ENCODE measurements at regions of chr14 and their contacts with region 1.

Region 1: GRCh38 chr14:90331497-90332435 is at the start of gene NRDE2:
- DNase-seq: peak; percentile 91
- ATAC-seq: peak; percentile 100
- H3K4me3 ChIP-seq: peak within 1 kb of the TSS; percentile 71
- H3K27ac ChIP-seq: peak within 1 kb of the TSS; percentile 85
- H3K4me1 ChIP-seq: no peaks in the 10 kb centered on the region
- H3K27me3 ChIP-seq: peaks cover 2% of the 10 kb centered on the region; the same call in 1 of the 2 replicates
- CTCF ChIP-seq: no peak
- POLR2A ChIP-seq: peak; percentile 55; the same call in 1 of the 2 replicates
- RAD21 ChIP-seq: no peak
- total RNA-seq, gene NRDE2: 7.5 and 9.3 TPM in 2 replicates

Region 2: GRCh38 chr14:90140298-90140955 is 191.3 kb before region 1 on chr14:
- CTCF ChIA-PET with region 1: no interaction called
- POLR2A ChIA-PET with region 1: no interaction called
- dilution Hi-C with region 1: no loop called
- in situ Hi-C with region 1: no loop called
- intact Hi-C with region 1: no loop called
- DNase-seq: peak; percentile 17
- ATAC-seq: no peak
- H3K4me3 ChIP-seq: no peak overlapping the region
- H3K27ac ChIP-seq: no peak overlapping the region
- H3K4me1 ChIP-seq: peaks cover 3% of the 10 kb centered on the region; the same call in 1 of the 2 replicates
- H3K27me3 ChIP-seq: peaks cover 4% of the 10 kb centered on the region
- CTCF ChIP-seq: no peak
- POLR2A ChIP-seq: no peak
- RAD21 ChIP-seq: no peak

Region 3: GRCh38 chr14:90179809-90180779 is 151.7 kb before region 1 on chr14:
- CTCF ChIA-PET with region 1: no interaction called
- POLR2A ChIA-PET with region 1: no interaction called
- dilution Hi-C with region 1: no loop called
- in situ Hi-C with region 1: no loop called
- intact Hi-C with region 1: no loop called
- DNase-seq: no peak
- ATAC-seq: no peak
- H3K4me3 ChIP-seq: no peak overlapping the region
- H3K27ac ChIP-seq: no peak overlapping the region
- H3K4me1 ChIP-seq: peaks cover 2% of the 10 kb centered on the region; the same call in 1 of the 2 replicates
- H3K27me3 ChIP-seq: peaks cover 7% of the 10 kb centered on the region
- CTCF ChIP-seq: no peak
- POLR2A ChIP-seq: no peak
- RAD21 ChIP-seq: no peak

Region 4: DNA sequence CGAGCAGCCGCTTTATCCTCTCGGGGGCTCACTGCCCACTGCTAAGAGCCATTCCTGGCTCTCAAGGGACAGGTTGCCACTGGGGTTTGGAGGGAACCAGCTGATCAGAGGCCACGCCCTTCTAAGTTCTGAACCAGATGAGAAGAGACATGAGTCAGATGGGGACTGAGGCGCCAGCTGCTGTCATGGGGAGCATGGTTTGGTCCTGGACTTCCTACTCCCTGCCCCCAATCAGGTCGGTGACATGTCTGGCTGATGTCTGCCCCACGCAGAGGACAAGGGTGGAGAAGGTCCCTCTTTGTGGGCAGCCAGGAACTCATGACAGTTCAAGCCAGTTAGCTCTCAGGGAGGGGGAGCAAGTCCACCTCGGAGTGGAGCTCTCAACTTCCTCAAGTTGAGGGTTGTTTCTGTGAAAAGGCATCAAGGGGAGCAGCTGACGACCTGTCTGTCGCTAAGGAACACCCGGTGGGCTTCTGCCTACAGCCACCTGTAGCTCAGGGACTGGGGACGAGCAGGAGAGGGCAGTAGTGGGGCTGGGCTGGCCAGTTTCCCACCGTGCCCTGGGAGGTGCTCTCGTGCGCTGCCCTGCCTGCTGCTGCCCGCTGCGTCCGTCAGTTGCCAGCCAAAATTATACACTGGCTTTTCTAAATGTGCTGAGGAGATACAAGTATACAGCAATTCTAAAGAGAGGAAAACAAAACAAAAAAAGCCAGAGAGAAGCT is 55.0 kb before region 1 on chr14:
- CTCF ChIA-PET with region 1: no interaction called
- POLR2A ChIA-PET with region 1: no interaction called
- dilution Hi-C with region 1: no loop called
- in situ Hi-C with region 1: no loop called
- intact Hi-C with region 1: no loop called
- DNase-seq: peak; percentile 13
- ATAC-seq: no peak
- H3K4me3 ChIP-seq: no peak overlapping the region
- H3K27ac ChIP-seq: no peak overlapping the region
- H3K4me1 ChIP-seq: peaks cover 6% of the 10 kb centered on the region; the same call in 1 of the 2 replicates
- H3K27me3 ChIP-seq: no peaks in the 10 kb centered on the region
- CTCF ChIP-seq: no peak
- POLR2A ChIP-seq: no peak
- RAD21 ChIP-seq: no peak

Region 5: GRCh38 chr14:90383075-90383730 is 51.4 kb after region 1 on chr14:
- CTCF ChIA-PET with region 1: no interaction called
- POLR2A ChIA-PET with region 1: no interaction called
- dilution Hi-C with region 1: no loop called
- in situ Hi-C with region 1: no loop called
- intact Hi-C with region 1: loop called (anchors 1 kb)
- DNase-seq: peak; percentile 100
- ATAC-seq: peak; percentile 95
- H3K4me3 ChIP-seq: peak overlapping the region; percentile 68
- H3K27ac ChIP-seq: peak overlapping the region; percentile 92
- H3K4me1 ChIP-seq: peaks cover 13% of the 10 kb centered on the region
- H3K27me3 ChIP-seq: no peaks in the 10 kb centered on the region
- CTCF ChIP-seq: 0 out of 2 replicates have a peak, but pooled peaks have one; percentile 4
- POLR2A ChIP-seq: peak; percentile 93
- RAD21 ChIP-seq: no peak; the same call in 1 of the 2 replicates